Stomach (tissue), 19 donors: ENCODE measurements at regions of chr4 and their contacts with region 1.

Region 1: GRCh38 chr4:121736735-121737351 is 28.1 kb downstream of the SMIM43 start:
- DNase-seq: peak in 1 of 2 donors; percentile 70
- H3K4me3 ChIP-seq: no peak overlapping the region
- H3K27ac ChIP-seq: no peak overlapping the region
- H3K4me1 ChIP-seq: no peaks in the 10 kb centered on the region
- H3K27me3 ChIP-seq: no peaks in the 10 kb centered on the region
- CTCF ChIP-seq: peak in 4 of 7 experiments; percentile 9 to 53 (median 42)
- EP300 ChIP-seq: no peak
- POLR2A ChIP-seq: no peak

Region 2: GRCh38 chr4:121462660-121463261 is 274.1 kb before region 1 on chr4:
- intact Hi-C with region 1: loop called (anchors 10 kb)
- DNase-seq: peak; percentile 31 to 81
- H3K4me3 ChIP-seq: no peak overlapping the region
- H3K27ac ChIP-seq: no peak overlapping the region
- H3K4me1 ChIP-seq: no peaks in the 10 kb centered on the region
- H3K27me3 ChIP-seq: peaks cover 0 to 7% (median 0%) of the 10 kb centered on the region in 3 donors
- CTCF ChIP-seq: peak in 5 of 7 experiments; percentile 5 to 42 (median 38)
- EP300 ChIP-seq: no peak
- POLR2A ChIP-seq: no peak

Region 3: GRCh38 chr4:122252584-122252983 is 515.7 kb after region 1 on chr4:
- intact Hi-C with region 1: no loop called
- DNase-seq: no peak
- H3K4me3 ChIP-seq: no peak overlapping the region
- H3K27ac ChIP-seq: no peak overlapping the region
- H3K4me1 ChIP-seq: no peaks in the 10 kb centered on the region
- H3K27me3 ChIP-seq: no peaks in the 10 kb centered on the region
- CTCF ChIP-seq: no peak
- EP300 ChIP-seq: no peak
- POLR2A ChIP-seq: no peak